PC-9 (cell line): ENCODE measurements at regions of chr16 and their contacts with region 1.

Region 1: DNA sequence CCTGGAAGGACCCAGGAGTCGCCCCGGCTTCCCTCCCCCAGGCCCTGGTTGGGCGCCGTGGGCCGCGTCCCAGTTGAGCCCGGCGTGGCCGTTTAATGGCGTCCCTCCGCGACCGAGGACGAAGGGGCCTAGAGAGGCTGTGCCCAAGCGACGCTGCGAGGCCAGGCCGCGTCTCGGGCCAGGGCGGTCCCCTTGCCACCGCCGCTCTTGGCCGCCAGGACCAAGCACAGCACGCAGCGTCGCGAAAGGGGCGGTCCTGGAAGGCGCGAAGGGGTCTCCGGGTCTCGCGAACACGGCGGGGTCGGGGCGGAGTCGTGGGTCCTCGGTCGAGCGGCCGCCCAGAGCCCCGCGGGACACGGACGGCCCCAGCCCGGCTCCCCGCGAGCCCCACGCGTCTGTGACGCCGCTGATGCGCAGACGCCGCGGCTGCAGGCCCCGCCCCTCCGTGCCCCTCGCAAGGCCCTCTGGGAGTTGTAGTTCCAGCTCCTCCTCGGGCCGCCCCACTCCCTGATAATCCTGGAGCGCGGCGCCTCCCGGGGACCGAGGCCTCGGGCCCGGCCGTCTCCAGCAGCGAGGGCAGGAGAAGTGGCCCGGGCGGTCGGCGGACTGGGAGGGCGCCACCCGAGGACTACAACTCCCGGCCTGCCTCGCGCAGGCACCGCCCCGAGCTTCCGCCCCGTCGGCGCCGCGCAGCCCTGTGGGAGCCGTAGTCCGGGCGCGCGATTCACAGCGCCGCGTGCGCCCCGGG is at the start of gene CAPN15:
- DNase-seq: peak; percentile 73 to 91
- H3K4me3 ChIP-seq: peak within 1 kb of the TSS; percentile 90
- H3K27ac ChIP-seq: peak within 1 kb of the TSS; percentile 78
- H3K4me1 ChIP-seq: peaks cover 32% of the 10 kb centered on the region
- H3K27me3 ChIP-seq: no peaks in the 10 kb centered on the region
- CTCF ChIP-seq: no peak; the same call in 1 of the 2 replicates
- total RNA-seq, gene CAPN15: 66.8 and 68.9 TPM in 2 replicates

Region 2: DNA sequence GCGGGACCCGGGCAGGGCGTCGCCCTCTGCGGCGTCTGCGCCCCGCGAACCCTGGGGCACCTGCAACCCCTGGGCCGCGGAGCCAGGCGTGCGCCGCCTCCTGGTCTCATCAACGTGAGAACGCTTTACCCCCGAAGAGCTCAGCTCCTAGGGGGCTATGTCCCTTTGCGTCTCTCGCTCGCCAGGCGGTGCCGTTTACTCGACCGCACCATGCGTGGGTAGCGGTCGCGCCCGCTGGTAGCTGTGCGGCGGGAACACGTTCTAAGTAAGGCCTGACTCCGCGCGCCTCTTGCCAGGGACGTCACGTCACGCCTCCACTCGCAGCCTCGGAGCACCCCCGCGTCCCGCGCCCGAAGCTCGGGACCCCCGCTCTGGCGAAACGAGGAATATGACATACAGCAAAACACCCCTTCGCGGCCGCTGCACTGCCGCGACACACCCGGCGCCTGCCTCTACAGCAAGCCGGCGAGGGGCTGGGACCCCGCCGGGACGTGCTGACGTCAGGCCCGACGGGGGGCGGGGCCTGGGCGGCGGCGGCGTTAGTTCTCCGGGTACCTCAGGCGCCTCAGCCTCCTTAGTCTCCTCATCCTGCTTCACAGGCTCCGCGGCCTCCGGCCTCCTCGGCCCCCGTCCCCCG is 102.0 kb before region 1 on chr16 and contains the start of gene RAB11FIP3:
- CTCF ChIA-PET with region 1: no interaction called
- POLR2A ChIA-PET with region 1: interaction called, 7 read pairs
- intact Hi-C with region 1: loop called (anchors 5 kb)
- DNase-seq: peak; percentile 57 to 81
- H3K4me3 ChIP-seq: peak within 1 kb of the TSS; percentile 68
- H3K27ac ChIP-seq: no peak within 1 kb of the TSS
- H3K4me1 ChIP-seq: peaks cover 22% of the 10 kb centered on the region
- H3K27me3 ChIP-seq: no peaks in the 10 kb centered on the region
- CTCF ChIP-seq: no peak; the same call in 1 of the 2 replicates
- total RNA-seq, gene RAB11FIP3: 38.4 and 42.4 TPM in 2 replicates

Region 3: DNA sequence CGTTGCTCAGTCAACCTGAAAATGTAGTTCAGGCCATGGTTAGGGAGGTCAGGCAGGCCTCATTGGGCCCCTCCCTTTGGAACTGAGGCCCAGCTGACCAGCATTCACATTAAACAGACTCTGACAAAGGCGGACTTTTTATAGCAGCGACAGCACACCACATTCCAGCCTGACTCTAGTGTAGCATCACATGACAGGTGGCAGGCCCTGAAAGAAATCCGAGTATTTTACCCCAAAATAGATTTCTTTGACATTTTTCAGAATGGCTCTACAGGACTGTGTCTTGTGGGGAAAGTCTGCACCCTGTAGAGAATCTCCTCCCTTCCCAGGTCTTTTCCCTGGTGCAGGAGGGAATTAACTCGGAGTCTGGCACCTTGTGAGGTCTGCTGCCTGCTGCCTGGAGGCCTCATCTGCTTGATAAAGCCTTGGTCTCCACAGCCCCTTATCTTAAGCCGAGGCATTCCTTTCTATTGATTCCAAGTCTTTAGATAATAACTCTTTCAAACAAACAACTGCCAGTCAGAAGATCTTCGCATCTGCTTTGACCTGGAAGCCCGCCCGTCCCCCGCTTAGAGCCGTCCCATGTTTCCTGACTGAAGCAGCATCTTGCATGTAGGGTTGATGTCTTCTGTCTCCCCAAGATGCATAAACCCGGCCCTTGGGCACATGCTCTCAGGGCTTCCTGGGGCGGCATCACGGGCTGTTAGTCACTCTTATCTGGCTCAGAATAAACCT is 43.7 kb before region 1 on chr16:
- CTCF ChIA-PET with region 1: no interaction called
- POLR2A ChIA-PET with region 1: interaction called, 23 read pairs
- intact Hi-C with region 1: no loop called
- DNase-seq: no peak
- H3K4me3 ChIP-seq: no peak overlapping the region
- H3K27ac ChIP-seq: no peak overlapping the region
- H3K4me1 ChIP-seq: no peaks in the 10 kb centered on the region
- H3K27me3 ChIP-seq: no peaks in the 10 kb centered on the region
- CTCF ChIP-seq: no peak

Region 4: GRCh38 chr16:648781-649589 is 121.8 kb after region 1 on chr16 and contains the start of gene WDR90:
- CTCF ChIA-PET with region 1: interaction called, 4 read pairs
- POLR2A ChIA-PET with region 1: interaction called, 6 read pairs
- intact Hi-C with region 1: loop called (anchors 2 kb)
- DNase-seq: peak; percentile 84 to 95
- H3K4me3 ChIP-seq: peak within 1 kb of the TSS; percentile 85
- H3K27ac ChIP-seq: peak within 1 kb of the TSS; percentile 82
- H3K4me1 ChIP-seq: peaks cover 54% of the 10 kb centered on the region
- H3K27me3 ChIP-seq: no peaks in the 10 kb centered on the region
- CTCF ChIP-seq: no peak
- total RNA-seq, gene WDR90: 118 and 126 TPM in 2 replicates

Region 5: DNA sequence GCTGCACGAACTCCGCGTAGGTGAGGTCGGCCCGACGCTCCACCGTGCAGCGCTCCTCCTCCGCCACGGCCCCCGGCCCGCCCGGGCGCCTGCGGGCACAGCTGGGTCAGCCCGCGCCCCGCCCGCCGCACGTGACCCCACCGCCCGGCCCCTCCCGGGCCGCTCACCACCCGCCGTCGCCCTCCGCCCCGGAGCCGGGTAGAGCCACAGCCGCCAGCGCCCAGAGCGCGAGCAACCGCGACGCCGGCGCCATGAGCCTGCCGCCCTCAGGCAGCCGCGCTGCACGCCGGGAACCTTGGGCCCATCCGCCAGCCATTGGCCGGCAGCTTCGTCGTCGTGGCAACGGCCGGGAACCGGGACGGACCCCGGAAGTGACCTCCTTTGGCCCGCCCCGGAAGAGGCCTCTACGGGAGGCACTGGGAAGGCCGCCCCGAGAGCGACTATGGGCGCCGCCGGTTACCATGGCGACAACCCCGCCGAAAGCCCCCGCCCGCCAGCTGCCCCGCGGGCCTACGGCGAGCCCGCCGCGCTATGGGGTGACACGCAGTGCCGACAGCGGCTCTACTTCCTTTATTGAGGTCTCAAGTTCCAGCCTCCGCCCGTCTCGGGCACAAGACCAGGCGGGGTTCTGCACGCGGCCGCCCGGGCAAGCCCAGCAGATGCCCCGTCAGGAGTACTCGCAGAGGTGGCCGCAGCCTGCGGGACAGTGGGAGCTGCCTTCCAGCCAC is 157.1 kb after region 1 on chr16 and contains the start of gene JMJD8:
- CTCF ChIA-PET with region 1: no interaction called
- POLR2A ChIA-PET with region 1: interaction called, 6 read pairs
- intact Hi-C with region 1: loop called (anchors 5 kb)
- DNase-seq: peak; percentile 92 to 99
- H3K4me3 ChIP-seq: peak within 1 kb of the TSS; percentile 83
- H3K27ac ChIP-seq: no peak within 1 kb of the TSS
- H3K4me1 ChIP-seq: peaks cover 37% of the 10 kb centered on the region
- H3K27me3 ChIP-seq: no peaks in the 10 kb centered on the region
- CTCF ChIP-seq: no peak
- total RNA-seq, gene JMJD8: 57.4 and 61.6 TPM in 2 replicates

Region 6: DNA sequence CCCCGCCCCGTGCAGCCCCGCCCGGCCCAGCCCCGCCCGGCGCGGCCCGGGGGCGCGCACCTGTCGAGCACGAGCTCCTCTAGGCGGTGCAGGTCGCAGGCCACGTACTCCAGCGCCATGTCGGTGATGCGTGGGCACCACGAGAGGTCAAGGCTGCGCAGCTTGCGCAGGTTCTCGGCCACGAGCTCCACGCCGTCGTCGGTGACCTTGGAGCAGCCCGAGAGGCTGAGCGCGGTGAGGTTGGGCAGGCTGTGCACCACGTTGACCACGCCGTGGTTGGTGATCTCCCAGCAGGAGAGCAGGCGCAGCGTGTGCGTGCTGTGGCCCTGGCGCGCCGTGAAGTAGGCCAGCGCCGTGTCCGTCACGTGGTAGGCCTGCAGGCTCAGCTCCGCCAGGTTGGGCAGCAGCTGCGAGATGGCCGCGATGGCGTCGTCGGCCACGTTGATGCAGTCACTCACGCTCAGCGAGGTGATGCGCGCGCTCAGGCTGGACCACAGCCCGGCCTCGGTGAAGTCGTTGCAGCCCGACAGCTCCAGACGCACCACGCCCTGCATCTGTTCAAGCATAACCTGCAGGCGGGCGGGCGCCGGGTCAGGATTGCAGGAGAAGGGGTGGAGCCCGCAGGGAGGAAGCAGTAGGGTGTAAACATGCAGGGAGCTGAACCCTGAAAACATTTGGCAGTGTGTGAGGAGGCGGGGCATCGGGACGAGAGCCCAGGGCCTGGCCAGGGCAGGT is 168.3 kb after region 1 on chr16:
- CTCF ChIA-PET with region 1: no interaction called
- POLR2A ChIA-PET with region 1: interaction called, 10 read pairs
- intact Hi-C with region 1: no loop called
- DNase-seq: peak; percentile 72 to 93
- H3K4me3 ChIP-seq: no peak overlapping the region
- H3K27ac ChIP-seq: no peak overlapping the region
- H3K4me1 ChIP-seq: peaks cover 8% of the 10 kb centered on the region
- H3K27me3 ChIP-seq: peaks cover 8% of the 10 kb centered on the region; the same call in 1 of the 2 replicates
- CTCF ChIP-seq: no peak

Region 7: DNA sequence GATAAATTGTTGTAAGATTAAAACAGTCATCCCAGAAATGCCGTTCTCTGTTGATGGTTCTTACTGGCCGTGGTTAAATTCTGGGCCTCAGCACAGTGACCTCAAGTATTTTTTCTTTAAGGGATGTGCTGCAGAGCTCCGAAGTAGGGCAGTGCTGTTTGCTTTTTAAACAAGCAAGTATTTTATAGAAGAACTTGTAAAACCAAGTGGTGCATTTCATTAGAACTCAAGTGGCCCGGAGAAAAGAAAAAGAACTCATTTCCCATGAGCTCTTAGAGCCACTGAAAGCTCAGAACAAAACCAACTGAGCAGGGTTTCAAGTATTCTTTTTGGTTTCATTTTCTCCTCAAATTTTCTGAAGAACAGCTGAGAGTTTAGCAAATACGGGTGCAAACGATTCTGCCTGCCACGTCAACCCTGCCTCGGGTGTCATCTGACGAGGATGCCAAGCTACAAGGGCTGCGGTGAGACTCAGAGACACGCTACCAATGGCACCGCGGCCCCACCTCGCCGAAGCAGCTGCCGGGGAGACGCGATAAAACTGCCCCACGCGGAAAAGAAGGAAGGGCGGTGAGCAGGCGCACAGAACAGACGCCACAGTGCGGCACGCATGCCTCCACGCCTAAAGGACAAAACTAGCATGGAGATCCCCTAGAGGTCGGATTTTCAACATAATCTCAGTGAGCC is 437.3 kb after region 1 on chr16:
- CTCF ChIA-PET with region 1: no interaction called
- POLR2A ChIA-PET with region 1: no interaction called
- intact Hi-C with region 1: no loop called
- DNase-seq: peak in 1 of 2 experiments; percentile 46
- H3K4me3 ChIP-seq: no peak overlapping the region
- H3K27ac ChIP-seq: no peak overlapping the region
- H3K4me1 ChIP-seq: peaks cover 3% of the 10 kb centered on the region; the same call in 1 of the 2 replicates
- H3K27me3 ChIP-seq: no peaks in the 10 kb centered on the region
- CTCF ChIP-seq: no peak